ENCODE measurements at regions of chr15 and their contacts with region 1.

Region 1: DNA sequence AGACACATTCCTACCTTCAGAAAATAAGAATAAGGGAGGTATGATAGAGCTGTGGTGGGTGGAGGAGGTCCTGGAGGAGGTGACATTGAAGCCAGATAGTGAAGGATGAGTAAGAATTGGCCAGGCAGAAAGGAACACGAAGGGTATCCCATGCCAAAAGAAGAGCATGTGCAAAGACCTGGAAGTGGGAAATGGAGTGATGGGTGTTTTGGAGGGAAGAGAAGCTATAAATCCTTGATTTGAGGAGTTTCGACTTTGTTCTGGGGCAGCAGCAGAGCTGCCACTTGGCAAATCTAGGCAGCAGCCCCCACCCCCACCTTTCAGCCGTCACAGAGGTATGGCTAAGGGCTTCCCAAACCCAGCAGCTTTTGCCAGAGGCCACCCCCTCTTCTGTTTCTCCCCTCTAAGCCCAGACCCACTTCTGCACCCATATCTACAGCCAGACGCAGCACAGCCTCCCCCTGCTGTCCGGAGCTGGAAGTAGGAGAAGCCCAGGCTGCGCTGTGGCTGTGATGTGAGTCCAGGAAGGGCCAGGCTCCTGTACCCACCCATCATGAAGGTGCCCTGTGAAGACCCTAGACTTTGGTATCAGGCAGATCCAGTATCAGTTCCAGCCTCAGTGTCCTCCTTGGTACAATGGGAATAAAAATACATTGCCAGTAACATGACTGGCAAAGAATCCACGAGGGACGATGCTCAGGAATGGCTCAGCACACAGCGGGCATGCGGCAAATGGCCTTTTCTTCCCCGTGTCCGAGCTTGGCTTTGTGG is 188.7 kb upstream of the LINGO1 start:
- DNase-seq: peak; percentile 89
- H3K4me3 ChIP-seq: peak overlapping the region; percentile 93
- H3K27ac ChIP-seq: peak overlapping the region; percentile 91
- H3K4me1 ChIP-seq: peaks cover 36% of the 10 kb centered on the region
- H3K27me3 ChIP-seq: no peaks in the 10 kb centered on the region
- CTCF ChIP-seq: peak; percentile 98

Region 2: GRCh38 chr15:76501726-76502125 is 1319.6 kb before region 1 on chr15:
- CTCF ChIA-PET with region 1: no interaction called
- POLR2A ChIA-PET with region 1: no interaction called
- intact Hi-C with region 1: no loop called
- DNase-seq: no peak
- H3K4me3 ChIP-seq: no peak overlapping the region
- H3K27ac ChIP-seq: no peak overlapping the region
- H3K4me1 ChIP-seq: no peaks in the 10 kb centered on the region
- H3K27me3 ChIP-seq: no peaks in the 10 kb centered on the region
- CTCF ChIP-seq: no peak

Region 3: GRCh38 chr15:77118882-77119321 is 702.5 kb before region 1 on chr15:
- CTCF ChIA-PET with region 1: interaction called, 3 read pairs
- POLR2A ChIA-PET with region 1: no interaction called
- intact Hi-C with region 1: loop called (anchors 5 kb)
- DNase-seq: peak; percentile 82
- H3K4me3 ChIP-seq: no peak overlapping the region
- H3K27ac ChIP-seq: no peak overlapping the region
- H3K4me1 ChIP-seq: no peaks in the 10 kb centered on the region
- H3K27me3 ChIP-seq: no peaks in the 10 kb centered on the region
- CTCF ChIP-seq: peak; percentile 93

Region 4: DNA sequence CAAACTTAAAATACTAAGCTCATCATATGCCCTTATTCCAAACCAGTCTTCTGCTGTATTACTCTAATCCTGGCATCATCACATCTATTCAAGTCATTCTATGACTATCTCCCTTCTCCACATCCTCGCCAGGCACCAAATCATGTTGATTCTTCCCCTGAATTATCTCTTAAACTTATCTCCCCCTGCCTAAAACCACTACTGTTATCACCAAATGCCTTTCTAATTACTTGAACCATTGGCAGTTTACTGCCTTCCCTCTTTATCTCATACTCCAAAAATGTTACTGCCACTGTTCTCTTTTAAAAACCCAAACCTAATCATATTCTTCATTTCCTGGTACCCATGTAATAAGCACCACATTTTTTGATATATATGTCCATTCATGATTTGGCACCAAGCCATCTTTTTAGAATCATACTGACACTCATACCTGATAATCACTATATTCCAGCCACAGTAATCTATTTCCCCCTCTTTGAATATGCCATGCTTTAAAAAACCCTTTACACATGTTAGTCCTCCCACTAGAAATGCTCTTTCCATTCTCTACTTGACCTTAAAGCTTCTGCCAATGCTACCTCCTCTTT is 528.3 kb before region 1 on chr15:
- CTCF ChIA-PET with region 1: no interaction called
- POLR2A ChIA-PET with region 1: no interaction called
- intact Hi-C with region 1: no loop called
- DNase-seq: no peak
- H3K4me3 ChIP-seq: no peak overlapping the region
- H3K27ac ChIP-seq: no peak overlapping the region
- H3K4me1 ChIP-seq: no peaks in the 10 kb centered on the region
- H3K27me3 ChIP-seq: no peaks in the 10 kb centered on the region
- CTCF ChIP-seq: no peak

Region 5: DNA sequence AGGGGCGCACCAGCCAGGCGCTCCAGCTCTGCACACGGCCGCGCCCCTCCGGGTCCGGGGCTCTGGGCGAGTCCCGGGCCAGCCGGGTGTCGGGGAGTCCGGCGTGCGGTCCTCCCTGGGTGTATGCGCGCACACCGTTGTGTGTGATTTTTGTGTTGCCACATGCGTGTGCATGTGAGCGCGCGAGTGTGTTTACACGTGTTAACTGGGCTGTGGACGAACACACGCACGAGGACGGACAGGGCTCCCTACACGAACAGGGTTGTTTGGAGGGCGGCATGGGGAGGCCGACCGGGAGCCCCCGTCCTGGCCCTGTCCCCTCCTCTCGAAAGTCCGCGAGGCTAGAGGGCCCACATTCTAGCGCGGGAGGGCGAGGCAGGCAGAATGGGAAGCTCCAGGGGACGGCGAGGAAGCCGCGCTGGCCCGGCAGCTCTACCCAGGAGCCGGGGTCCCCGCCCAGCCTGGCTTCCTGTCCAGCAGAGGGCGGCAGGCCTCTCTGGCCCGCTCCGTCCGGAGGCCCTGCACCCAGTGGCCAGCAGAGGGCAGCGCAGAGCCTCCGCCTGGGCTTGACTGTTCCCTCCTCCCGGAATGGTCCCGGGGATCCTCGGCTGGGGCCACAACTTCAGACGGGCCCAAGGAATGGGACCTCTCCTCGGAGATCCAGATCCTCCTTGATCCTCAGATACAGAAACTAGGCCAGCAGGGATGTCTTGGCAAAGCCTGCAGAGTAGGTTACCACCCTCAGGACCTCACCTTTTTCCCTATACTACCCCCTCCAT is 188.1 kb before region 1 on chr15:
- CTCF ChIA-PET with region 1: interaction called, 18 read pairs
- POLR2A ChIA-PET with region 1: no interaction called
- intact Hi-C with region 1: loop called (anchors 1 kb)
- DNase-seq: peak; percentile 87
- H3K4me3 ChIP-seq: peak overlapping the region; percentile 68
- H3K27ac ChIP-seq: peak overlapping the region; percentile 82
- H3K4me1 ChIP-seq: peaks cover 34% of the 10 kb centered on the region
- H3K27me3 ChIP-seq: no peaks in the 10 kb centered on the region
- CTCF ChIP-seq: peak; percentile 100

Region 6: DNA sequence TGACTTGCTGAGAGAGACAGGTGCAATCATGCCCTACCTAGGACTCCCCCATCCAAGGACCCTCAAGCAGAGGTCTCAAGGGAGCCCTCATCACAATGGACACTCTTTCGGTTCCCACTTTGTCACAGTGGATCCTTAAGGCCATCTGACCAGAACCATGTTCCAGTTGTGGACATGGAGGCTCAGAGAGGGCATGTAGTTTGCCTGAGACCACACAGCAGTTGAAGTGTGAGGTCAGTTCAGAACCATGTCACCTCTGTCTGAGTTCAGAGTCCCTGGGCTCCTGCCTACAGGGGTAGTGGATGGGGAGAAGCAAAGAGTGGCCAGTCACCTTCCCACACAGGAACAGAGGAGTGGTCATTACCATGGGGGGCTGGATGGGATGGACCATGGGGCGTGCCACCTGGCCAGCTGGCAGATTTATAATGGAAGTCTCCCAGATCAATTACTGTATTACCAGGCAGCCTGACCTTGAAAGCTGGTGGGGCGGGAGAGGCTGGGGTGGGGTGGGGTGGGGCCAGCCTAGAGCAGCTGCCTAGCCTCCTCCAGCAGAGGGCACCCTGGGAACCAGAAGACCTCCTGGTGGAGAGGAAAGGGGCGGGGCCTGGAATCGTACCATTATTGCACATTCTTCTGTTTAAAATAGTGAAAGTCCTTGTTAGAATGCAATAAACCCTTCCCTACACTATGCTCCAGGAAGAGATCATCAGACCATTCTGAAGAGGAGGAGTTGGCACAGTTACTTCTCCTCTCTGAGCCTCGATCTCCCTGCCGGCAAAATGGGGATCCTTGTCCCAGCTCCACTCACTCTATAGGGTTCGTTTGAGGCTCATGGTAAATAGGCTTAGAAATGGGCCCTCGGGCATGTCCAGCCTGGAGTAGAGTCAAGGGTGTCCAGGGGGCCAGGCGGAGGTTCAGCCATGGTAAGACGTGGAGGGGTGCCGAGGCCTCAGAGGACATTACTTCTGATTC is 161.7 kb before region 1 on chr15:
- CTCF ChIA-PET with region 1: interaction called, 6 read pairs
- POLR2A ChIA-PET with region 1: no interaction called
- intact Hi-C with region 1: loop called (anchors 1 kb)
- DNase-seq: peak; percentile 92
- H3K4me3 ChIP-seq: no peak overlapping the region
- H3K27ac ChIP-seq: peak overlapping the region; percentile 70
- H3K4me1 ChIP-seq: peaks cover 44% of the 10 kb centered on the region
- H3K27me3 ChIP-seq: no peaks in the 10 kb centered on the region
- CTCF ChIP-seq: peak; percentile 68

Region 7: DNA sequence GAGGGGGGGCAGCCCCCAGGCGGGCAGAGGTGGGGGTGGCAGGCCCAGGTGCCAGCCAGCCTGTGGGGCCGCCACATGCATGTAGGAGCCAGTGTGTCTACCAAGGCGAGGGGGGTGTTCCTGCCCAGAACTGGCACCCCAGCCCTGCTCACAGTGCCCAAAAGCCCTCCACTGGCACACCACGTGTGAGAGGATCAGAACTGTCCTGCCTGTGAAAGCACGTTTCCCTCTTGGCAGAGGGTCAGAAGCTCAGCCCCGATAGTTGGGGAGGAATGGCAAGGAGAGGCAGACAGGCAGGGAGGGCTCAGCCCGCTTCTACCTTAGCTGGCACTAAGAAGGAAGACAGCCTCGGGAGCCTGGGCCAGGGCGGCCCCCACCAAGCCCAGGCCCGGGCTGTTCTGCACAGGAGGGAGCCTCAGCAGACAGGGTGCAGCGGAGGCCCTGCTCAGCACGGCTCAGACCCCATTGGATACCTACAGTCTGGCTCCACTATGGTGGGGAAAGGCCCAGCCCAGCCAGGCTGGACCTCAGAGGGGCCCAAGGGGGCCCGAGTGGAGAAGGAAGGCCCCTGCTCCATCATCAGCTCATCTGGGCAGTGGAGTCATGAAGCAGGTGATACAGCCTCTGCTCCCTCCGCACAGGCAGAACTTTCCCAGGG is 103.9 kb before region 1 on chr15:
- CTCF ChIA-PET with region 1: no interaction called
- POLR2A ChIA-PET with region 1: no interaction called
- intact Hi-C with region 1: no loop called
- DNase-seq: peak; percentile 35
- H3K4me3 ChIP-seq: no peak overlapping the region
- H3K27ac ChIP-seq: peak overlapping the region; percentile 78
- H3K4me1 ChIP-seq: peaks cover 55% of the 10 kb centered on the region
- H3K27me3 ChIP-seq: no peaks in the 10 kb centered on the region
- CTCF ChIP-seq: no peak

Region 8: GRCh38 chr15:77753270-77753873 is 68.0 kb before region 1 on chr15:
- CTCF ChIA-PET with region 1: no interaction called
- POLR2A ChIA-PET with region 1: no interaction called
- intact Hi-C with region 1: no loop called
- DNase-seq: peak; percentile 49
- H3K4me3 ChIP-seq: no peak overlapping the region
- H3K27ac ChIP-seq: no peak overlapping the region
- H3K4me1 ChIP-seq: peaks cover 22% of the 10 kb centered on the region
- H3K27me3 ChIP-seq: no peaks in the 10 kb centered on the region
- CTCF ChIP-seq: no peak